Endothelial cell of umbilical vein (primary cell): ENCODE measurements at regions of chr17 and their contacts with region 1.

Region 1: GRCh38 chr17:1561400-1562175 is 1.0 kb downstream of the PITPNA start:
- DNase-seq: peak; percentile 24
- H3K4me3 ChIP-seq: peak overlapping the region; percentile 45 to 83 (median 69)
- H3K27ac ChIP-seq: peak overlapping the region; percentile 46
- H3K4me1 ChIP-seq: peaks cover 38% of the 10 kb centered on the region
- H3K27me3 ChIP-seq: no peaks in the 10 kb centered on the region
- CTCF ChIP-seq: peak; percentile 15 to 40
- POLR2A ChIP-seq: no peak

Region 2: DNA sequence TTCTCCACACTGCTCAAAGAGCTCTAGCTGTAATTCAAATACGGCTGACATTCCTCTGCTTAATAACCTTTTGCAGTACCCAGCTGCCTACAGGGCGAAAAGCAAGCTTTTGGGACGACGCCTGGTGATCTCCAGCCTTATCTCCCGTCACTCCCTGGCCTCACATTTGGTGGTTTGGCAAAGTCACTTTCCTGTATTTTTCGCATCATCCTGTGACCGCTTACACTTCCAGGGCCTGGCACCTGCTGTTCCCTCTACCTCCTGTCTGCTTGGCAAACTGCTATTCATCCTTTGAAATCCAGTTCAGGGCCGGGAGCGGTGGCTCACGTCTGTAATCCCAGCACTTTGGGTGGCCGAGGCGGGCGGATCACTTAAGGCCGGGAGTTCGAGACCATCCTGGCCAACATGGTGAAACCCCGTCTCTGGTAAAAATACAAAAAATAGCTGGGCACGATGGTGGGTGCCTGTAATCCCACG is 294.1 kb before region 1 on chr17:
- CTCF ChIA-PET with region 1: no interaction called
- POLR2A ChIA-PET with region 1: no interaction called
- dilution Hi-C with region 1: no loop called
- intact Hi-C with region 1: loop called (anchors 5 kb)
- DNase-seq: no peak
- H3K4me3 ChIP-seq: no peak overlapping the region
- H3K27ac ChIP-seq: no peak overlapping the region
- H3K4me1 ChIP-seq: peaks cover 6% of the 10 kb centered on the region
- H3K27me3 ChIP-seq: peaks cover 11 to 16% of the 10 kb centered on the region in 2 experiments
- CTCF ChIP-seq: no peak
- POLR2A ChIP-seq: no peak

Region 3: GRCh38 chr17:1617620-1618174 is 56.1 kb after region 1 on chr17:
- CTCF ChIA-PET with region 1: no interaction called
- POLR2A ChIA-PET with region 1: no interaction called
- dilution Hi-C with region 1: no loop called
- intact Hi-C with region 1: no loop called
- DNase-seq: peak; percentile 87
- H3K4me3 ChIP-seq: no peak overlapping the region
- H3K27ac ChIP-seq: peak overlapping the region; percentile 80
- H3K4me1 ChIP-seq: peaks cover 19% of the 10 kb centered on the region
- H3K27me3 ChIP-seq: no peaks in the 10 kb centered on the region
- CTCF ChIP-seq: no peak
- POLR2A ChIP-seq: peak; percentile 52

Region 4: GRCh38 chr17:1783834-1784611 is 222.4 kb after region 1 on chr17:
- CTCF ChIA-PET with region 1: no interaction called
- POLR2A ChIA-PET with region 1: no interaction called
- dilution Hi-C with region 1: no loop called
- intact Hi-C with region 1: no loop called
- DNase-seq: peak; percentile 80
- H3K4me3 ChIP-seq: no peak overlapping the region
- H3K27ac ChIP-seq: peak overlapping the region; percentile 19
- H3K4me1 ChIP-seq: peaks cover 21% of the 10 kb centered on the region
- H3K27me3 ChIP-seq: no peaks in the 10 kb centered on the region
- CTCF ChIP-seq: peak; percentile 49 to 63
- POLR2A ChIP-seq: no peak